PC-9 (cell line): ENCODE measurements at regions of chr6 and their contacts with region 1.

Region 1: GRCh38 chr6:143098054-143098671 is 37.5 kb downstream of the AIG1 start:
- DNase-seq: no peak
- H3K4me3 ChIP-seq: no peak overlapping the region
- H3K27ac ChIP-seq: no peak overlapping the region
- H3K4me1 ChIP-seq: no peaks in the 10 kb centered on the region
- H3K27me3 ChIP-seq: no peaks in the 10 kb centered on the region
- CTCF ChIP-seq: no peak

Region 2: DNA sequence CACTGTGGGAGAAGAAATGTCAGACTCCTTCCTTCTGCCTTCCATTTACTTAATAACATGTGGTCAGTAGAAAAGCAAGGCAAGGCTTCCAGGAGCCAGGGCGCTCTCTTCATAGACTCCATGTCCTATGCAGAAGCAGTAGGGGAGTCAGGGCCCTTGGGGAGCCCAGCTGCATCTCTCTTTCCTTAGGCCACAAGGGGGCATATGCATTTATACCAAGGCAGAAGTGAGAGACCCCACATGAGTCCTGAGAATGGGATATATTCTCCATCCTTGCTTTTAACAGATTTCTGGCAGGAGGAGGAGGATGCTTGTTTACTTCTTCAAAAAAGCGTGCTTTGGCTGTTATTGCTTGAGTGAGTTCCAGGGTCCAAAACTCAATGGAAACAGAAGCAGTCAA is 351.6 kb before region 1 on chr6:
- CTCF ChIA-PET with region 1: no interaction called
- POLR2A ChIA-PET with region 1: no interaction called
- intact Hi-C with region 1: no loop called
- DNase-seq: no peak
- H3K4me3 ChIP-seq: no peak overlapping the region
- H3K27ac ChIP-seq: no peak overlapping the region
- H3K4me1 ChIP-seq: no peaks in the 10 kb centered on the region
- H3K27me3 ChIP-seq: no peaks in the 10 kb centered on the region
- CTCF ChIP-seq: no peak

Region 3: DNA sequence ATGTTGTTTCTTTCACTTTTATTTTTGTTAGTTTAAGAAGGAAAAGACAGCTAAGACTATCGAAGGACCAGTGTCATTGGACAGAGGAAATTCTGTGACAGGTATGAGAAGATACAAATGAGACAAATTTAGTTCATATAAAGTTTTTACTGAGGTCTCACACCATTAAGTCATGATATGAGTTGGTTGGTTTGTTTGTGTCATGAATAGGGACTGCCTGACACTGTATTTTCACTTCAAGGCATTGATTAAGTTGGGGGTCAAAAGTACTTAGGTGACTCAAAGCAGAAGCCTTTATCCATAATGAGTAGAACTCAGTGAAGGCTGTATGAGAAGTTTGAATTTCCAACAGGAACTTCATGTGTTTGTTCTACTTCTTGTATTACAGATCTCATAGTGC is 131.9 kb before region 1 on chr6:
- CTCF ChIA-PET with region 1: no interaction called
- POLR2A ChIA-PET with region 1: no interaction called
- intact Hi-C with region 1: no loop called
- DNase-seq: no peak
- H3K4me3 ChIP-seq: no peak overlapping the region
- H3K27ac ChIP-seq: no peak overlapping the region
- H3K4me1 ChIP-seq: no peaks in the 10 kb centered on the region
- H3K27me3 ChIP-seq: no peaks in the 10 kb centered on the region
- CTCF ChIP-seq: no peak

Region 4: GRCh38 chr6:143078468-143079324 is 19.5 kb before region 1 on chr6:
- CTCF ChIA-PET with region 1: interaction called, 10 read pairs
- POLR2A ChIA-PET with region 1: no interaction called
- intact Hi-C with region 1: no loop called
- DNase-seq: no peak
- H3K4me3 ChIP-seq: no peak overlapping the region
- H3K27ac ChIP-seq: no peak overlapping the region
- H3K4me1 ChIP-seq: peaks cover 8% of the 10 kb centered on the region; the same call in 1 of the 2 replicates
- H3K27me3 ChIP-seq: no peaks in the 10 kb centered on the region
- CTCF ChIP-seq: no peak